Mammary epithelial cell (primary cell): ENCODE measurements at regions of chr12 and their contacts with region 1.

Region 1: DNA sequence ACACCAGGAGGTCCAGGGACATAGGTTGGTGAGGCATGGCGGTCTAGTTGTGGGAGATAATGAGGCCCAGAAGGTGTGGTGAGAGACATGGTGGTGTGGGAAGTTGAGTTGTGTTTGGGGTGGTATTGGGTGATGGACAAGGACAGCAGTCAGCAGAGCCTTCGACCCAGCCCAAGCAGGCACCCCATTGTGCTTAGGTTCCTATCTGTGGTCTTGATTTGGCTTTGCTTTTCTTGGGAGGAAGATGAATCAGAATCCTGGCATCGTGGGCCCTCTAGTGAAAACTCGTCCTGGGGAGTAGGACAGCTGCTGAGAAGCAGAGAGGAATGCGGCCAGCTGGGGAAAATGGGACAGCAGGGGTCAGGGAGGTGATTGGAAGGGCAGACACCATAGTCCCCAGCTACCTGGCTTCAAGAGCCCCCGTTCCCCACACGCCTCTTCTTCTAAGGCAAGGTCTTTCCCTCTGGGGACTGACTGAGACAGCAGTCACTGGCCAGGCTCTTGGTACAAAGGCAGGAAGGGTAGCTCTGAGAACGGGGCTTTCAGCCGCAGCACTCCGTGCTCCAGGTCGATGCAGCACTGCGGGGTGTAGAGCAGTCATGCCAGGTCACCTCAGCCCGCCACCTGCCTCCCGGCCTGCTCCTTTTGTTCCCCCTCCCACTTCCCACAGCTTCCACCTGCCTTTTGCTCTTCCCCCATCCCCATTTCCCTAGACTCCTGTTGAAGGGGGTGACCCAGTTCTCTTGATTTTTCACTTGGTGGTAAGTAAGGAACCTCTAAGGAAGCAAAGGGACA is 7.9 kb downstream of the NRIP2 start:
- DNase-seq: no peak
- H3K4me3 ChIP-seq: no peak overlapping the region
- H3K27ac ChIP-seq: no peak overlapping the region
- H3K4me1 ChIP-seq: no peaks in the 10 kb centered on the region
- H3K27me3 ChIP-seq: no peaks in the 10 kb centered on the region
- CTCF ChIP-seq: no peak

Region 2: GRCh38 chr12:2930865-2931264 is 103.9 kb after region 1 on chr12:
- CTCF ChIA-PET with region 1: no interaction called
- dilution Hi-C with region 1: loop called (anchors 5 kb)
- in situ Hi-C with region 1: no loop called
- intact Hi-C with region 1: no loop called
- DNase-seq: no peak
- H3K4me3 ChIP-seq: no peak overlapping the region
- H3K27ac ChIP-seq: no peak overlapping the region
- H3K4me1 ChIP-seq: peaks cover 3% of the 10 kb centered on the region
- H3K27me3 ChIP-seq: no peaks in the 10 kb centered on the region
- CTCF ChIP-seq: no peak